Activated T-helper 1 cell treated with anti-CD3 and anti-CD28 coated beads, Interleukin-12 subunit alpha, Interleukin-12 subunit beta, Interleukin-2, Interleukin-4 antibody, amounts not matched to agents 30 ng/mL and 10 ng/mL and 1 ng/mL, durations not matched to agents 14 hours and 24 hours and 36 hours (primary cell): ENCODE measurements at regions of chr9 and their contacts with region 1.

Region 1: GRCh38 chr9:34126207-34127034 is at the start of gene DCAF12:
- DNase-seq: peak; percentile 89
- H3K4me3 Mint-ChIP-seq: peak within 1 kb of the TSS; percentile 96
- H3K27ac Mint-ChIP-seq: peak within 1 kb of the TSS; percentile 96
- H3K4me1 Mint-ChIP-seq: peaks cover 43% of the 10 kb centered on the region
- H3K27me3 Mint-ChIP-seq: no peaks in the 10 kb centered on the region
- total RNA-seq, gene DCAF12: 49.7 and 52.8 TPM in 2 replicates

Region 2: GRCh38 chr9:34025062-34025461 is 101.4 kb before region 1 on chr9:
- intact Hi-C with region 1: no loop called
- DNase-seq: no peak
- H3K4me3 Mint-ChIP-seq: no peak overlapping the region
- H3K27ac Mint-ChIP-seq: no peak overlapping the region
- H3K4me1 Mint-ChIP-seq: peaks cover 19% of the 10 kb centered on the region
- H3K27me3 Mint-ChIP-seq: no peaks in the 10 kb centered on the region

Region 3: DNA sequence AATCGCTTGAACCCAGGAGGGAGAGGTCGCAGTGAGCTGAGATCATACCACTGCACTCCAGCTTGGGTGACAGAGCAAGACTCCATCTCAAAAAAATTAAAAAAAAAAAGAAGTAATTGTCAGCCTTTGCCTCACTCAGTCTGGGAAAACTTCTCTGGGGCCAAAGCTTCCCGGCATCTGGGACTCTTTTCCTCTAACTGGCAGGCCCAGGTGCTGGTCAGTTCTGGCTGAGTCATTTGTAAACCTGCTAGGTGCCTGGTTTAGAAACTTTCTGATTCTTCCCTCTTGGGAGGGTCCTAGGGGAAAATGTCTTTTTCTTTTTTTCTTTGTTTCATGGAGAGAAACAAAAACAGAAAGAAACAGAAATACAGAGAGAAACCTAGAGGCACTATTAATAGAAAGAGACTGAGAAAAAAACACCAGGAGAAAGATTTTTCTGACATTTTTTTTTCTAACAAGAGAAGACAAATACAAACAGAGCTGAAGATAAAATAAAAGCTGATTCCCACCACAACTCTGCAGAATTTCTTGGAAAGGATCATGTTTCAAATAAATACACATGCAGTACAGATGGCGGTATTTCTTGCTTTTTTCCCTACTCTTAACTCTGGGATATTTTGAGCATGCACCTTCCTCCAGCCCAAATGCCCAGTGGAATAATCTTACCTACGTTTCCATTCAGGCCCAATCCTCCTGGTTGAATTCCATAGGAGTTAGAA is 55.7 kb before region 1 on chr9:
- intact Hi-C with region 1: no loop called
- DNase-seq: no peak
- H3K4me3 Mint-ChIP-seq: no peak overlapping the region
- H3K27ac Mint-ChIP-seq: no peak overlapping the region
- H3K4me1 Mint-ChIP-seq: peaks cover 5% of the 10 kb centered on the region
- H3K27me3 Mint-ChIP-seq: no peaks in the 10 kb centered on the region

Region 4: DNA sequence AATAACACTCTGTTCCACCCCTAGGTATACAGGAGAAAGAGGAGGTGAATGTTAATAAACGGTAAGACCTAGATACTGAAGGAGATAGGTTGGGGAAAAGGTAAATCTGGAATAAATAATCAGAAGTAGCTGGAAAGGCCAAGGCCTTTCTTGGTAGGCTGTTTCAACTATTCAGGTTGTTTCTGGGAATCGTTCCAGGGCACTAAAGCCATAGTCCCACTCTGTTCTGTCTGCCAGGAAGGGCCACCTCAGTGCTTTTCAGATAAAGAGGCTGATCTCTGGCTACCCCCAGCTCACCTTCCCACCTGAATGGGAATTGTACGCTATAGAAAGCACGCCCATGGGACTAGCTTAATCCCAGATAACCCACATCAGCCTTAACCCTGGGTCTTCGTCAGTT is 32.8 kb before region 1 on chr9:
- intact Hi-C with region 1: loop called (anchors 2 kb)
- DNase-seq: no peak
- H3K4me3 Mint-ChIP-seq: no peak overlapping the region
- H3K27ac Mint-ChIP-seq: no peak overlapping the region
- H3K4me1 Mint-ChIP-seq: peaks cover 9% of the 10 kb centered on the region
- H3K27me3 Mint-ChIP-seq: no peaks in the 10 kb centered on the region

Region 5: DNA sequence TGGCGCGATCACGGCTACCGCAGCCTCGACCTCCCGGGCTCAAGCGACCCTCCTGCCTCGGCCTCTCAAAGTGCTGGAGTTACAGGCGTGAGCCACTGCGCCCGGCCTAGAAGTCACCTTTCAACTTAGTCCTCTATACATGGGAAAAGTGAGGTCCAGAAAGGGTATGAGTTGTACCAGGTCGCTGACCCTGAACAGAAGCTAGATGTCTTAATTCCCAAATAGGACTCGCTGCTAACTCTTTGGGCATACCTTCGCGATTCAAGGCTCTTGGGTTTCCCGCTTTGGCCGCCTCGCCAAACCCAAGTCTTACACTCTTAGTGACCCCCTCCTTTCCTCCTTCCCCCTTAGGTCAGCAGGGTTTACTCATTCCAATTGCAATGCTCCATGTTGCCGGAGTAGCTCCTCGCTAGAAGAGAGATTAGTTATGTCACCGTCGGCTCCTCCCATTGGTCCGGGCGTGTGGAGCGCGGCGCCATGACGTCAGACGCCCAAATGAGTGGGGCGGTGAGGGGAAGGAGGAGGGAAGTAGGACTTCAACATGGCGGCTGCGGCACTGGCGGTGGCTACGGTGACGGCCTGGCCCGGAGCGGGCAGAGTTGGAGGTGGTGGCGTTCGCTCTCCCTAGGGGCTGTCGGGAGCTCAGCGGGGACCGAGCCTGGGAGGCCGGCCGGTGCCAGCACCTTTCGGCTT is 52.2 kb after region 1 on chr9 and contains the start of gene UBAP1:
- intact Hi-C with region 1: loop called (anchors 1 kb)
- DNase-seq: peak; percentile 95
- H3K4me3 Mint-ChIP-seq: peak within 1 kb of the TSS; percentile 92
- H3K27ac Mint-ChIP-seq: peak within 1 kb of the TSS; percentile 94
- H3K4me1 Mint-ChIP-seq: peaks cover 5% of the 10 kb centered on the region
- H3K27me3 Mint-ChIP-seq: no peaks in the 10 kb centered on the region
- total RNA-seq, gene UBAP1: 30.0 and 33.4 TPM in 2 replicates

Region 6: DNA sequence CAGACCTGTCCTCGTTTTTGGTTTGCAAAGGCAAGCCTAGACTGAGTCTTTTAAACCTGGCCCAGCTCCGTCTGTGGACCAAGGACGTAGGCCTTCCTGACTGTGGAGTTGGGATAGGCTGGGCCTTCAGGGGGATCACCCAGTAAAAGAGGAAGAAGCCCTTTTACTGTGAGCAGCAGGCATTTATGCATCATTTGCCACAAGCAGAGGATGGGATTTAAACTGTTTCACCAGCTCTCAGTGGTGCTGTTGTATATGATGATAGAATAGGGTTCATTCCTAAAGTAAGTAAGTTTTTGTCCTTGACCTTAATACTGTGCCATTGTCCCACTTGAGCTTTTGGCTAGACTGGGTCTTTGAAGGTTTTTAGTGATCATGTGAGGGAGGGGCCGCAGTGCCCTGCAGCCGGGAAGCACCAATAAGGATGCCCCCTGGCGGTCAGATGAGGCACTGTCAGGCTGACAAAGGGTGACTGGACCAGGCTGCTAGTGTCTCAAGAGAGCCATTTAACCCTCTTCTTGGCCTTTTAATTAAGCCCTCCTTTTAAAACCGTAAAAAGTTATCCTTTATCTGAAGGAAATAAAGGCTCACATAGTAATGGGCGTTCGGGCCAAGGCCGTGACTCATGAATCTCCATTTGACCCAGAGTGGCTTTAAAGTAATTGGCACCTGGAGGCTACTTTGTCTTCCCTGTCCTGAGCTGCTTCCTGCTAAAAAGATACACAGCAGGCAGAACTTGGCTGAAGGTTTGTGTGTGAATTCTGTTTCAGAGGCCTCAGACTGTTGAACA is 126.4 kb after region 1 on chr9:
- intact Hi-C with region 1: loop called (anchors 1 kb)
- DNase-seq: peak; percentile 50
- H3K4me3 Mint-ChIP-seq: no peak overlapping the region
- H3K27ac Mint-ChIP-seq: no peak overlapping the region
- H3K4me1 Mint-ChIP-seq: peaks cover 15% of the 10 kb centered on the region
- H3K27me3 Mint-ChIP-seq: no peaks in the 10 kb centered on the region

Region 7: DNA sequence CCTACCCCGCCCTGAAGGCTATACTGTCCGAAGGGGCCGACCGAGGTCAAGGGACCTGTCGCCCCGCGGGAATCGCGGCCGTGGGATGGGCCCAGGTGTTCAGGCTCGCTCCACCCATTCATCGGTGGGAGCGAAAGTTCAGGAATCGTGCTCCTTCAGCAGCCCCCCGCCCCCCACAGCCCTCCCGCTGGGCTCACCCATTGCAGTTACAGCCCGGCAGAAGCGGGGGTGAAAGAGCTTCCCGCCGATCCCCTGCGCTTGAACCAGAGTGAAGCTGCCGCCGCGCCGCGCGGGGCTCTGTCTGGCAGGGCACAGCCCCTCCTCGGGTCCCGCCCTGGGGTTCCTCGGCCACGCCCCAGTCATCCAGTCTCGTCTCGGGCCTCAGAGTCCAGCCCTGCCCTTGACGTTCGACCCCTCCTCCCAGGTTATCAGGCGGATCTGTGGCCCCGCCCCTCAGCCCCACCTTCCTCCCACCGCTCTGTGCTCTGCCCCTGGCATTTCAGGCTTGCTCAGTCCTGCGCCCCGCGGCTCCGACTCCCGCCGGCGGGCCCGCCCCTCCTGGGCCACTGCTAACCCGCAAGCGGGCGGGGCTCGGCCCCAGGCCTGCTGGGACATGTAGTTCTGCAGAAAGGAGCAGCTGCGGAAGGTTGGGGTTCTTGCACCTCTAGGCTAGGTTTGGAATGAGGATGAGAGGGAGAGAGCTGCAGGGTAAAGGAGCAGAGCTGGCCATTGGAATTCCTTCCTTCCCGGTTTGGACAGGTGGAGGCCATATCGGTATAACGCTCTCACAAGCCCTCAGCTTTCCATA is 250.4 kb after region 1 on chr9 and contains the start of gene MYORG:
- intact Hi-C with region 1: loop called (anchors 1 kb)
- DNase-seq: peak; percentile 97
- H3K4me3 Mint-ChIP-seq: peak within 1 kb of the TSS; percentile 88
- H3K27ac Mint-ChIP-seq: peak within 1 kb of the TSS; percentile 32
- H3K4me1 Mint-ChIP-seq: peaks cover 45% of the 10 kb centered on the region
- H3K27me3 Mint-ChIP-seq: peaks cover 13% of the 10 kb centered on the region
- total RNA-seq, gene MYORG: 1.0 and 1.9 TPM in 2 replicates

Region 8: GRCh38 chr9:34611829-34612630 is 485.6 kb after region 1 on chr9 and contains the start of gene RPP25L:
- intact Hi-C with region 1: loop called (anchors 1 kb)
- DNase-seq: peak; percentile 84
- H3K4me3 Mint-ChIP-seq: peak within 1 kb of the TSS; percentile 95
- H3K27ac Mint-ChIP-seq: peak within 1 kb of the TSS; percentile 96
- H3K4me1 Mint-ChIP-seq: peaks cover 24% of the 10 kb centered on the region
- H3K27me3 Mint-ChIP-seq: no peaks in the 10 kb centered on the region
- total RNA-seq, gene RPP25L: 37.5 and 40.2 TPM in 2 replicates